Posterior cingulate gyrus (tissue), 11 donors: ENCODE measurements at regions of chr12 and their contacts with region 1.

Region 1: GRCh38 chr12:50055831-50056638 is 1.4 kb upstream of the ASIC1 start:
- DNase-seq: peak in 8 of 10 donors; percentile 43 to 93 (median 60)

Region 2: GRCh38 chr12:49730568-49731101 is 325.4 kb before region 1 on chr12:
- intact Hi-C with region 1: no loop called
- DNase-seq: no peak

Region 3: GRCh38 chr12:49967042-49967776 is 88.8 kb before region 1 on chr12:
- intact Hi-C with region 1: loop called (anchors 1 kb)
- DNase-seq: peak; percentile 84 to 99 (median 96)

Region 4: DNA sequence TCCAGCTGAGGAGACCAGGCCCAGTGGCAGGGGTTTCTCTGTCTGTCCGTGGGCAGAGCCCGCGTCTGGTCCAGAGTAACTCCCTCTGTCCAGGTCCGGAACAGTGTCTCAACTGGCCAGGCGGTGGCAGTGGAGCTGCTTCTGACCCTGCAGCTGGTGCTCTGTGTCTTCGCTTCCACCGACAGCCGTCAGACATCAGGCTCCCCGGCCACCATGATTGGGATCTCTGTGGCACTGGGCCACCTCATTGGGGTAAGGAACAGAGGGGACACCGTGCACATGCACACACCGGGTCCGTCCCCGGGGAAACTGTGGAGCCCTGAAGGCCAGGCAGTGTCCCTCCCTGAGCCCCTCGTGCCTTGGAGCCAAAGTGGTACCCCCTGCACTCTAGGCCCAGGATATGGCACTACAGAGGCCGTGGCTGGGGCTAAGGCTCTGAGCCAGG is 81.8 kb before region 1 on chr12:
- intact Hi-C with region 1: loop called (anchors 2 kb)
- DNase-seq: peak; percentile 75 to 98 (median 86)

Region 5: DNA sequence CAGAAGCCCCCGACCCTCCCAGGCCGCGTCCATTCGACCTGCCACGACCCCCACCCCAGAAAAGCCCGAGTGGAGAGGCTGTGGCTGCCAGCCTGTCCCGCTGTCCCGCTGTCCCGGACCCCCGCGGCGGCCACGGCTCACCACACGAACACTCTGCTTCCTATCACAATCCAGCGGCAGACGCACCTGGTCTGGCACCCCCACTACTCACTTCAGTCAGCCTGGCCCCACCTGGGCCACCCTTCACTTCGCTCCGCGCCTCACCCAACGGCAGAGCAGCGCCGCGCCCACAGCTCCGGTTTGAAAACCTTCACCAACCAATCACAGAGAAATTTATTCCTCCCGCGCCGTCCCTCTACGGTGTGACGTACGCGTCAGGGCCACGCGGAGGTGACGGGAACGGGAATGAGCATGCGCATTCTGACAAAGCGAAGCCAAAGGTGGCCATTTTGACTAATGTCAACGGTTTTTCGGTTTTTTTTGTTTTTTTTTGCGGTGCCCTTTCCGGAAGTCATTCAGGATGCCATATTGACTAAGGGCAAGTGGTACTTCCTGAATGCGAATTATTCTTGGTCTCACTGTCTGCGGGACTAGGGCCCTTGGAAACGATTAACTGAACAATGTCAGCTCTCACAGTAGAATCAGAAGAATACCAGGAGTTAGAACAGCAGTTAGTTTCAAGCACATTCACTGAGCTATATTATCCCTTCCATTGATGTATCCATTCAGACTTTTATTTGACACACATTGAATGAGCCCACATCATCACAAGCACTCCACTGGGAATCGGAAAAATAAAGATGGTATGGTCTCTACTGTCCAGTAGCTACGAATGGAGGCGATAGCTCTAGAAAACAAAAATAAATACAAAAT is 30.6 kb before region 1 on chr12 and contains the start of gene RACGAP1:
- intact Hi-C with region 1: loop called (anchors 5 kb)
- DNase-seq: peak; percentile 88 to 98 (median 92)

Region 6: GRCh38 chr12:50043854-50044253 is 12.2 kb before region 1 on chr12:
- intact Hi-C with region 1: loop called (anchors 1 kb)
- DNase-seq: no peak

Region 7: DNA sequence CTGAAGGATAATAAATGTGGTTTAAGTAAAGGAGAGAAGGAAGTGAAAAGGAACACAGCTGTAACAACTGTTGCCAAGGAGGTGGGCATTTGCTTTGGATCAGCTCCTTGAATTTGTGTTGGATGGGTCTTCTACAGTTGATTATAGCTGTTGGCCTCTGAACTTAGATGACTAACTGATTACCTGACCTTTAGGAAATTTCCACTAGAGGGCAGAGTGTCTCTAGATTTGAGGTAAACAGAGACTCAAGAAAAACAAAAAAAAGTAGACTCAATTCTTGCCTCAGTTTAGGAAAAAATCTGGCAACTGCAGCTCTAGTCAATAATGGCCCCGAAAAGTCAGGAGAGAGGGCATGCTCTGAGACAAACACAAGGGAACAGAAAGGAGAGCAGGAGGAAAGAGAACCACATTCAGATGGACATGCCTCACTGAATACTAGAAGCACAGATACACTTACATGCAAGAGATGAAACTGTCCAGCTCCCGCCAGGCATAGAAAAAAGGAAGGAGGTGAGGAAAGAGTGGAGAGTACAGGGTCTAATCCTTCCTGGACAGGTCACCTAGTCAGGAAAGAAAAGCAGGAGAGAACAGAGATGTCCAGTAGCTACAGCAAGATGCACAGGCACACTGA is 76.6 kb after region 1 on chr12:
- intact Hi-C with region 1: no loop called
- DNase-seq: no peak